ENCODE measurements at regions of chr15 and their contacts with region 1.

Region 1: DNA sequence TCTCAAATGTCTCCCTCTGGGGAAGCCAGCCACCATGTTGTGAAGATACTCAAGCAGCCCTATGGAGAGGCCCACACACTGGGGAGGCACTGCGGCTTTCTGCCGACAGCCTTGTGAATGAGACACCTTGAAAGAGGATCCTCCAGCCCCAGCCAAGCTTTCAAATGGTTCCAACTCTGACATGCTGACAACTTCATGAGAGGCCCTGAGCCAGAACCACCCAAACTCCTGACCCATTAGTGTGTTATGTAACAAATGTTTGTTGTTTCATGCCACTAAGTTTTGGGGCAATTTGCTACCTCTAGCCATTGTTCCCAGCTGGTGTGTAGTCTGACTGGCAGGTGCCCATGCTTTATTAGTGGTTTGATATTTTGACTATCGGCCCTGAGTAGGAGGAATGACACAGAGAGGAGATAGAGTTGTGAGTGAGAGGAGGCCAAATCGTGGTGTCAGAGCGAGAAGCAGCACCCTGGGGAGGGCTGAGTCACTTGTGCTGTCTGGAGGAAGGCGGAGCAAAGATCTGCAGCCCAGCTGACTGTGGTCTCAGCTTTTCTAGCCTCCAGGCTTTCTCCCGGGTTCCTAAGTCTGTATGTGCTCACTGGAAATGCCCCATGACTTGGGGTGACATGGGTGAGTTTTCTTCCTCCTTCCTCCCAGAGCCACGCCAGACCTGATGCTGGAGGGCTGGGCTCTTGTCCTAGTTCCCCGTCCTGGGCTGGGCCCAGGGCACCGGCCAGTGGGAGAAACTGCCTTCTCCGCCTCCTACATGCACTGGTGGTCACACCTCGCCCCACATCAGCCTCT is 56.7 kb upstream of the BLM start:
- DNase-seq: peak; percentile 73
- H3K4me3 ChIP-seq: no peak overlapping the region
- CTCF ChIP-seq: no peak

Region 2: DNA sequence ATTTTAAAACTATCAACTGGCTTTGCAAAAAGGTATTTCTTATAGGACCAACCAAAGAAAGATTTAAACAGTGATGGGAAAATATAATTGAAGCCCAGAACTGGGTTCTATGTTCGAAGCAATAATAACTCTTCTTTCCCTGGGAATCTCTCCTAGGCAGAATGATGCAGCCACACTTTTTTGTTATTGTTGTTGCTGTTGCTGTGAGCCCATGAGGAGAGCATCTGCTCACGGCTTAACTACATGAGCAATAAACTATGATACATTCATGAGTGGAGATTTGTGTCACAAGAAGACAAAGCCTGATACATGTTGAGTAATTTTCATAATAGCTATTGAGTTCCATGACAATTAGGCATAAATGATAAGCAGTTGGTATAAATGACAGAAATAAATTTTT is 50.2 kb before region 1 on chr15:
- in situ Hi-C with region 1: loop called (anchors 5 kb)
- DNase-seq: no peak
- H3K4me3 ChIP-seq: no peak overlapping the region
- CTCF ChIP-seq: no peak

Measured in astrocyte of the cerebellum (primary cell).